Esophagus squamous epithelium (tissue), 5 donors: ENCODE measurements at regions of chr16 and their contacts with region 1.

Region 1: GRCh38 chr16:67883872-67884261 is 818 bp upstream of the NRN1L start:
- DNase-seq: no peak
- H3K4me3 ChIP-seq: no peak overlapping the region
- H3K27ac ChIP-seq: peak overlapping the region in 3 of 4 donors; percentile 48 to 71 (median 59)
- H3K4me1 ChIP-seq: peaks cover 11 to 20% (median 13%) of the 10 kb centered on the region in 3 donors
- H3K27me3 ChIP-seq: no peaks in the 10 kb centered on the region
- CTCF ChIP-seq: peak; percentile 78 to 91 (median 84)
- POLR2A ChIP-seq: no peak

Region 2: GRCh38 chr16:67919622-67920221 is 35.9 kb after region 1 on chr16:
- intact Hi-C with region 1: loop called (anchors 5 kb)
- DNase-seq: no peak
- H3K4me3 ChIP-seq: no peak overlapping the region
- H3K27ac ChIP-seq: peak overlapping the region in 3 of 4 donors; percentile 12 to 34 (median 13)
- H3K4me1 ChIP-seq: peaks cover 9 to 82% (median 16%) of the 10 kb centered on the region in 3 donors
- H3K27me3 ChIP-seq: no peaks in the 10 kb centered on the region
- CTCF ChIP-seq: peak in 1 of 6 experiments; percentile 10
- POLR2A ChIP-seq: no peak

Region 3: GRCh38 chr16:67993189-67994039 is 109.5 kb after region 1 on chr16:
- intact Hi-C with region 1: no loop called
- DNase-seq: peak; percentile 61
- H3K4me3 ChIP-seq: peak overlapping the region; percentile 21 to 61 (median 43)
- H3K27ac ChIP-seq: peak overlapping the region; percentile 76 to 84 (median 82)
- H3K4me1 ChIP-seq: peaks cover 10 to 15% (median 14%) of the 10 kb centered on the region in 3 donors
- H3K27me3 ChIP-seq: no peaks in the 10 kb centered on the region
- CTCF ChIP-seq: peak; percentile 98 to 100 (median 99)
- POLR2A ChIP-seq: no peak

Region 4: DNA sequence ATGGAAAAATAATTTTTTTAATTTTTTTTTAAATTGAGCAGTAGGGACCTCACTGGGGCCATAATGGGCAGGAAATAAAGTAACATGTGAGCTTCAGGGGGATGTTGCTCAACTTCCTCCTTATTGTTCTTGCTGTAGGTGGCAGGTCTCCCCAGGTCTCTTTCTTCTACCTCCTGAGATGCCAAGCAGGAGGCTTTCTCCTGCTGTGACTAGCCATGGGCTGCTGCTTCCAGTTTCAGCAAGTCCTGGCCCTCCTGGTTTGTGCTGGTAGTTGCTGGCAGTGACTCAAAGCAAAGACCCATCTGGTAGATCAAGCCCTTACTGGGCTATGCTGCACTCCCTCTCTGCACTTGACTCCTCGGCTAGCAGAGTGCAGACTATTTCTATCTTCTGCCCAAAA is 129.6 kb after region 1 on chr16:
- intact Hi-C with region 1: no loop called
- DNase-seq: no peak
- H3K4me3 ChIP-seq: no peak overlapping the region
- H3K27ac ChIP-seq: peak overlapping the region in 3 of 4 donors; percentile 1 to 52 (median 49)
- H3K4me1 ChIP-seq: peaks cover 0 to 16% (median 11%) of the 10 kb centered on the region in 3 donors
- H3K27me3 ChIP-seq: no peaks in the 10 kb centered on the region
- CTCF ChIP-seq: no peak
- POLR2A ChIP-seq: no peak